Activated CD4-positive, alpha-beta T cell treated with anti-CD3 and anti-CD28 coated beads, Interleukin-2, amount 10 ng/mL, durations not matched to agents 24 days and 14 days (primary cell): ENCODE measurements at regions of chr7 and their contacts with region 1.

Region 1: DNA sequence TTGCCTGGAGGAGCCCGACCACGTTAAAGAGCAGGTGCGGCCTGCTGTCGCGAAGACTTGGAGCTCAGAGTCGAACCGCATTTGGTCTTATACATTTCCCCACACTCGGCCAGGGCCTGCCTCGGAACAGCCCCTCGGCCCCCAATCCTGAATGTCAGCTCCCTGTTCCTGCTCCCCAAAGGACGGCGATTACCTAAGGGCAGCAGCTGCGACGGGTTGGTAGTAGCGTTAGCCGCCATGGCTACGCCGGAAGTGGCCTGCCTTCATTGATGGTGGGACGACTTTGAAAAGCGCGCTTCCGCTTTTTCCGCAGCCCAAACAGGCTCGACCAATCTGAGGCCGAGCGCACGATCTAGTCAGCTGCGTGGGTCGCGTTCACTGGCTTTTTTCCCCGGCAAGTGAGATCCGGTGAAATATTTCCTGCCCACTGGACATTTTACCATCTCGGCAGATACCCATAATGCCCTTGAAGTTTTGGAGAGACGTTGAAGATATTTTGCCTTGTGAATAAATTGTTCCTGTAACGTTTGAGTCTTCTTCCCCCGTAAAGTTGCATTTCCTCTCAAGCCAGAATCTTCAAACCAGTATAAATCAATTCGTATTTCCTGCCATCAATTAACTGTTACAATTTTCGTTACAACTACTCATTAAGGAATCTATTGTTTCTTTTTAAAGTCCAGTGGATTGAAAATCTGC is at the start of gene LSM5:
- DNase-seq: peak; percentile 97
- H3K4me3 Mint-ChIP-seq: peak within 1 kb of the TSS; percentile 91
- H3K27ac Mint-ChIP-seq: peak within 1 kb of the TSS; percentile 95
- H3K4me1 Mint-ChIP-seq: peaks cover 22% of the 10 kb centered on the region
- H3K27me3 Mint-ChIP-seq: no peaks in the 10 kb centered on the region
- total RNA-seq, gene LSM5: 92.9 and 99.2 TPM in 2 replicates

Region 2: GRCh38 chr7:32403463-32404229 is 86.6 kb before region 1 on chr7:
- intact Hi-C with region 1: no loop called
- DNase-seq: no peak
- H3K4me3 Mint-ChIP-seq: no peak overlapping the region
- H3K27ac Mint-ChIP-seq: no peak overlapping the region
- H3K4me1 Mint-ChIP-seq: no peaks in the 10 kb centered on the region
- H3K27me3 Mint-ChIP-seq: no peaks in the 10 kb centered on the region

Region 3: DNA sequence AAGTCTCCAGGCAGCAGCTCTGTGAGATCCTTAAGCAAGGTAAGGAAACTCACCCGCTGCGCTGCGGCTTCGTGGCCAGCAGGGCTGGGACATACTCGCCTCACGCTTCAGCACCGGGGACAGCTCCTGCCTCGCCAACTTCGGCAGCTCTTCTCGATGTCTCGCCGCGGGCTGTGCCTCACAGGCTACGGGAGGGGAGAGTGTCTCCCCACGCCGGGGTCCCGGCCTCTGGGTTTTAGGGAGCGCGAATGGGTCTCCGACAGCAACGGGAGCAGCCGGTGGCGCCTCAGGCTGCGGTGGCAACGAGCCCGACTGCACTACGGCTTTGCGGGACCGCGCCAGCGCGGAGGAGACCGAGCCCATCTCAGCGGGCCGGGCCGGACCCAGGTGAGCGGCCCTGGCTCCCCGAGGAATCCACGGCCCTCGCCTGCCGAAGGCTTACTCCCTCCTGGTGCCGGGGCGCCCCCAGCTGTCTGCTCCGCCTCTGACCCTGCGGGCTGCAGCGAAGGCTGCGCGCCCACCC is 62.4 kb before region 1 on chr7:
- intact Hi-C with region 1: no loop called
- DNase-seq: peak; percentile 92
- H3K4me3 Mint-ChIP-seq: no peak overlapping the region
- H3K27ac Mint-ChIP-seq: no peak overlapping the region
- H3K4me1 Mint-ChIP-seq: no peaks in the 10 kb centered on the region
- H3K27me3 Mint-ChIP-seq: peaks cover 21% of the 10 kb centered on the region

Region 4: DNA sequence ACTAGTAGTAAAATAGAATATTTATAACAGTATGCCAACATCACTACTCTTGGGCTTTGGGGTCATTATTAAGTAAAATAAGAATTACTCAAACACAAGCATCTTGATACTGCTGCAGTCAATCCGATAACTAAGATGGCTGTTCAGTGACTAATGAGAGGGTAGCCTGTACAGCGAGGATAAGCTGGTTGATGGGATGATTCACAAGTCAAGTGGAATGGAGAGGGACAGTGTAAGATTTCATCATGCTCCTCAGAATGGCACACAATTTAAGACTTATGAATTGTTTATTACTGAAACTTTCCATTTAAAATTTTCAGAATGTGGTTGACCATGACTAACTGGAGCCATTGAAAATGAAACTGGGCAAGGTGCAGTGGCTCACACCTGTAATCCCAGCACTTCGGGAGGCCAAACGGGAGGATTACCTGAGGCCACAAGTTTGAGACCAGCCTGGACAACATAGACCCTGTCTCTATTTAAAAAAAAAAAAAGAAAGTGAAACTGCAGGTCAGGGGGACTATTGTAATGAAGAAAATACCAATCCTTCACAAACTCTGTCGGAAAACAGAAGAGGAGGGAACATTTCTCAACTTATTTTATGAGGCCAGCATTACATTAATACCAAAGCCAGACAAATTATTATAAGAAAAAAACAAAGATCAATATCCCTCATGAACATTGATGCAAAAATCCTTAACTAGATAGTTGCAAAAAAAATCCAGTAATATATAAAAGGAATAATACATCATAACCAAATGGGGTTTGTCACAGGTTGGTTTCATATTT is 16.2 kb after region 1 on chr7:
- intact Hi-C with region 1: loop called (anchors 1 kb)
- DNase-seq: no peak
- H3K4me3 Mint-ChIP-seq: no peak overlapping the region
- H3K27ac Mint-ChIP-seq: peak overlapping the region; percentile 73
- H3K4me1 Mint-ChIP-seq: peaks cover 23% of the 10 kb centered on the region
- H3K27me3 Mint-ChIP-seq: no peaks in the 10 kb centered on the region

Region 5: DNA sequence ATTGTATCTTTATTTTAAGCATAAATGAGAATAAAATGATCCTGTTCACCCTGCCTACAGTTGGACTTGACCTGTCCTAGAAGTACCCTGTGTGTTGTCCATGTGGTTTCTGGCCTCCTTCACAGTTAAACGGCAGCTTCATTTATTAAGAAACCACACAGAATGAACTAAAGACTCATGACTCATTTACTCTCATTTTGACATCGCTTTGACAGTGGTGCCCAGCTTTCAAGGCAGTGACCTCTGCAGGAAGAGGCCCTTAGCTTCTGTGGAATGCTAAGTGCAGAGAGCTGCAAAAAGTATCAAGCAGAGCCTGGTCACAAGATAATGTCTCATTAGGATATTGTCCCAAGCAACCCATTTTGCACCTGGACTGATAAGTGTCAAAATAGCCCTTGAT is 98.4 kb after region 1 on chr7:
- intact Hi-C with region 1: loop called (anchors 1 kb)
- DNase-seq: no peak
- H3K4me3 Mint-ChIP-seq: peak overlapping the region; percentile 15
- H3K27ac Mint-ChIP-seq: peak overlapping the region; percentile 75
- H3K4me1 Mint-ChIP-seq: peaks cover 13% of the 10 kb centered on the region
- H3K27me3 Mint-ChIP-seq: no peaks in the 10 kb centered on the region

Region 6: DNA sequence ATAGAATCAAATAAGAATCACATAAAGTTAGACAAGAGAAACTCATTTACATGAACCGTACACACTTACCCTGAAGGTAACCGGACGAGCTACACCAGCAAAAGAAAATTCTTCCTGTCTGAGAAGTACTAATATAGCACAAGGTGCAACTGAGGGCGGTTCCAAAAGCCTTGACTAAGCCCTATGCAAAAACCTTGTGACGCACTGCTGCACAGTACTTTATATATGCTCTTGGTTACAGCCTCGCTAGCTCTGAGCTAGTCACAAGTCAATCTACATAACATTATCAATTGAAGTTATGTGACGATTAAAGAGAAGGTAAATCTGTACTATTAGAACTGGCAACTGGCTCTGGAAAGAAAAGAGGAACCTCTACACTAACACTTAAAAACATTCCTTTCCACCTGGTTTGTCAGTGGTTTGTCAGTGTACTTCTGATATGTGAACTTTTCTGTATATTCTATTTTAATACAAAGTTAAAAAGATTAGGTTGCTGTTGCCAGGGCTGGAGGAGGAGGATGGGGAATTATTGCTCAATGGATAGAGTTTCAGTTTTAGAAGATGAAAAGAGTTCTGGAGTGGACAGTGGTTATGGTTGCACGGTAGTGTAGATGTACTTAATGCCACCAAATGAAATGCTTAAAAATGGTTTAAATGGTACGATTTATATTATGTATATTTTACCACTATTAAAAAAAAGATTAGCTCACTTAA is 550.7 kb after region 1 on chr7:
- intact Hi-C with region 1: loop called (anchors 5 kb)
- DNase-seq: peak; percentile 92
- H3K4me3 Mint-ChIP-seq: peak overlapping the region; percentile 72
- H3K27ac Mint-ChIP-seq: peak overlapping the region; percentile 56
- H3K4me1 Mint-ChIP-seq: peaks cover 42% of the 10 kb centered on the region
- H3K27me3 Mint-ChIP-seq: no peaks in the 10 kb centered on the region

Region 7: GRCh38 chr7:33128990-33129805 is 638.9 kb after region 1 on chr7 and contains the start of gene BBS9:
- intact Hi-C with region 1: loop called (anchors 2 kb)
- DNase-seq: peak; percentile 97
- H3K4me3 Mint-ChIP-seq: peak within 1 kb of the TSS; percentile 98
- H3K27ac Mint-ChIP-seq: peak within 1 kb of the TSS; percentile 91
- H3K4me1 Mint-ChIP-seq: peaks cover 15% of the 10 kb centered on the region
- H3K27me3 Mint-ChIP-seq: peaks cover 5% of the 10 kb centered on the region
- total RNA-seq, gene BBS9: 4.2 and 4.3 TPM in 2 replicates